ENCODE measurements at regions of chr20 and their contacts with region 1.

Region 1: GRCh38 chr20:35303735-35304491 is 11.7 kb upstream of the FAM83C start:
- DNase-seq: peak; percentile 81
- H3K4me3 Mint-ChIP-seq: no peak overlapping the region
- H3K27ac Mint-ChIP-seq: peak overlapping the region; percentile 71
- H3K4me1 Mint-ChIP-seq: peaks cover 32% of the 10 kb centered on the region
- H3K27me3 Mint-ChIP-seq: no peaks in the 10 kb centered on the region

Region 2: GRCh38 chr20:35166242-35166830 is 137.6 kb before region 1 on chr20:
- intact Hi-C with region 1: no loop called
- DNase-seq: no peak
- H3K4me3 Mint-ChIP-seq: no peak overlapping the region
- H3K27ac Mint-ChIP-seq: no peak overlapping the region
- H3K4me1 Mint-ChIP-seq: peaks cover under 1% of the 10 kb centered on the region
- H3K27me3 Mint-ChIP-seq: peaks cover 1% of the 10 kb centered on the region

Region 3: DNA sequence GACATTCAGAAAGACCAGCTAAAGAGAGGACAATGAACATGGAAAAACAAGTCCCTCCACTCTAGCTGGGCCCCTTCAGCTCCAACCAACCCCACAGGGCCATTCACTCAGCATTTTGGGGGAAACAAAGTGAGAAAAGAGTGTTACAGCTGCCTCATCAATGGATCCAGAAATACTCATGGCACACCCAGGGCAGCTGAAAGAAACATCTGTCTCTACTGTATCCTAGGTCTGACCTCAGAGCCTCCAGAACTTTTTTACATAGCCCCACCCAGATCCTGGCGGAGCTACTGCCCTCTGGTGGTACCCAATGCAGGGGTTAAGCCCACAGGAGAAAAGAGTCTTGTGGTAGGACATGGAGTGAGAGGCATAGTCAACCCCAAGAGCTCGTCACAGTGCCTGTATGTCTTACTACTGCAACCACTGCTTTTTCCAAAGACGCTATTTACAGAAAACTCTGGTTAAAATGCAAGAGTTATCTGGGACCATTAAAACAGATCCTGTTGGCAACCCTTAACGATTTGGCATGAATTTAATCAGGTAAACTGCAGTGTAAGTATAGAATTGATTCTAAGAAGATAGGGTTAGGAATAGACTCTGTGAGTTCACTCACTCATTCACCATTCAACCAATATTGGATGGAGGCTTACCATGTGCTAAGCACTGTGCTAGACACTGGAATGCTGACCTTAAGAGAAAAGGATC is 25.7 kb after region 1 on chr20:
- intact Hi-C with region 1: loop called (anchors 1 kb)
- DNase-seq: peak; percentile 27
- H3K4me3 Mint-ChIP-seq: no peak overlapping the region
- H3K27ac Mint-ChIP-seq: no peak overlapping the region
- H3K4me1 Mint-ChIP-seq: peaks cover 57% of the 10 kb centered on the region
- H3K27me3 Mint-ChIP-seq: no peaks in the 10 kb centered on the region

Region 4: DNA sequence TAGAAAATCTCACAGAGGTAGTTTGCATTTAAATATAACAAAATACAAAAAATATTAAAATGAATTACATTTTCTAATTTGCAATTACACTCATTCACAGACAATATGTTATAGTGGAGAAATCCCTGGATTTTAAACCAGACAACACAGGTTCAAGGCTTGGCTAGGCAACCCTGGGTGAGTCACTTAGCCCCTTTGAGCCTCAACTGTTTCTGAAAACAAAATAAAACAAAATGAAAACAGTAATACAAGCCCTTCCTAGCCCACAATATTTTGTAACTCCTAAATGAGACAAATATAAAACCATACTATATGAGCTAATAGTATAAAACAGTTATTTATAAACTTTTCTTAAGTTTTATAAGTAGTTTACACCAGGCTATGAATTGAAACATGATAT is 66.8 kb after region 1 on chr20:
- intact Hi-C with region 1: no loop called
- DNase-seq: no peak
- H3K4me3 Mint-ChIP-seq: no peak overlapping the region
- H3K27ac Mint-ChIP-seq: no peak overlapping the region
- H3K4me1 Mint-ChIP-seq: no peaks in the 10 kb centered on the region
- H3K27me3 Mint-ChIP-seq: no peaks in the 10 kb centered on the region

Region 5: DNA sequence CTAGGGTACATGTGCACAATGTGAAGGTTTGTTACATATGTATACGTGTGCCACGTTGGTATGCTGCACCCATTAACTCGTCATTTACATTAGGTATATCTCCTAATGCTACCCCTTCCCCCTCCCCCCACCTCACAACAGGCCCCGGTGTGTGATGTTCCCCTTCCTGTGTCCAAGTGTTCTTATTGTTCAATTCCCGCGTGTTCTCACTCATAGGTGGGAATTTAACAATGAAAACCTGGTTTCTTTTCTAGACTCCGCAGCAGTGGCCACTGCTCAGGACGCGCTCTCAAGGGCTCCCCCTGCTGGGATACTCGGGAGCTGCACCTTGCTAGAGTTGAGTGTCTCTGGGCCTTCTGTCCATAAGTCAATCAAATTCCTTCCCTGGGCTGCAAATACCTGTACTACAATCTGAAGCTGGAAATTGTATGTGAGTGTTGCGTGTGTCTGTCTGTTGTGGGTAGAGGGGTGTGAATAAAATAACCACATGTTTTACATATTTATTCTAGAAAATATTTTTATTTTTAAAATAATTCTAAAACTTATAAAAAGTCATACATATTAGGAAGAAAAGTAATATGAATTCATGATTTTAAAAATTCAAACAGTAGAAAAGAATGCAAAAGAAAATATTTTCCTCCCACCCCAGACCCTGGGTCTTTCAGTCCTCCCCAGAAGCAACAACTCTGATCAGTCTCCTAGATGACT is 143.3 kb after region 1 on chr20:
- intact Hi-C with region 1: loop called (anchors 1 kb)
- DNase-seq: peak; percentile 84
- H3K4me3 Mint-ChIP-seq: peak overlapping the region; percentile 89
- H3K27ac Mint-ChIP-seq: peak overlapping the region; percentile 72
- H3K4me1 Mint-ChIP-seq: peaks cover 4% of the 10 kb centered on the region
- H3K27me3 Mint-ChIP-seq: peaks cover 11% of the 10 kb centered on the region

Region 6: DNA sequence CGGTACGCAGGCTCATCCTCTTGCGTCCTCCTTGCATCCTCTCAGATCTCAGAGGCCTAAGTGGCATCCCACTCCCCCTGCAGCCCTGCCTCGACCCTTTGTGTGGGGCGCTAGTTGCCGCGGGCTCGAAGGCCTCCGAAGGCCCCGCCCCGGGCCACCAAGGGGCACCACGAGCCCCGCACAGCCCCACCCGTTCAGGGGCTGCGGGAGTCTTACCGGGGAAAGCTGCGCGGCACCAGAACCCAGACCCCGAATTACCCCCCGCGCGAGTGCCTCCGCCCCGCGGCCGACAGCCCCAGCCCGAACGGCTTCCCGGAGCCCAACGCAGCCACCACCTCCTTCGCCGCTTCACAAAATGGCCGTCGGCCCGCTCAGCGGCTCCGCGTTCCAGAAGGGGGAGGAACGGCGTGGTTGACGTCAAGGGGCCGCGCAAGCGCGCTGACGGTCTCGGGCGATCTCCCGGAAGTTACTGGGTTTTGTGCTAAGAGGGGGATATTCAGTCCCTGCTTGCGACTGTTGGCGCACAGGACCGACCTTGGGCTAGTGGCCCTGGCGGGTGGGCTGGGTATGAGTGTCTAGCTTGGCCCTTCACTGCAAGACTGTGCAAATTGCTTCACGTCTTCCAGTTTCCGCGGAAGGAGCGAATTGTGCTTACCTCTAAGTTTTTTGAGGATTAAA is 360.8 kb after region 1 on chr20 and contains the starts of genes CPNE1 and RBM12:
- intact Hi-C with region 1: loop called (anchors 10 kb)
- DNase-seq: peak; percentile 91
- H3K4me3 Mint-ChIP-seq: peak within 1 kb of the TSS; percentile 95
- H3K27ac Mint-ChIP-seq: peak within 1 kb of the TSS; percentile 99
- H3K4me1 Mint-ChIP-seq: peaks cover 48% of the 10 kb centered on the region
- H3K27me3 Mint-ChIP-seq: no peaks in the 10 kb centered on the region
- total RNA-seq, gene CPNE1: 304 and 308 TPM in 2 replicates
- total RNA-seq, gene RBM12: 151 and 168 TPM in 2 replicates